ENCODE measurements at regions of chr11 and their contacts with region 1.

Region 1: DNA sequence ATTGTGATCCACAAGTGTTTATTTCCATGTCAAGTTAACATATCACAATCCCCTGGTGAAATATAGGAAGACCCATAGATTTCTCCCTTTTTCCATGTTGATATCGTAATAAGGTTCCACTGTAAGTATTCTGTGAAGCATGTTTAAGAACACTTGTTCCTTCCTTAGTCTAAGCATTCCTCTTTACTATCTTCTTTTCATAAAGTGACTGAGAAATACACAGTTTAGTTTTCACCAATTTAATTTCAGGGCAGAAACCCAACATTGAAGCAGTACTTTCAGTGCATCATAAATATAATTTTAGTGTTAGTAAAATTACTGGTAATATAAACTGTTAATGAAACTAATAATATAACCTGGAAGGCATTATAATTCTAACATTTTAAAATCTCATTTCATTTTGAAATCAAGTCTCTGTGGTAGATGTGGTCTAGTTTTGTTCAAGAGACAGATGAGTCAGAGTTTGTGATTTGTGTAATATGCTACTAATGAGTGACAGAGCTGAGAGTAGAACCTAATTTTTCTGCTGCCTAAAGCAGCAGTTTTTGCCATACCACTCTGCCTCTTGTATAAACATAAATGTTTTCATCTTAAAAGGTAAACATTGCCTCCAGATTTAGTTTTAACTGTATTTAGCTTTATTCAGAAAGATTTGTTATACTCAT is 79.4 kb downstream of the ATM start:
- DNase-seq: no peak
- H3K4me3 ChIP-seq: no peak overlapping the region
- H3K27ac ChIP-seq: no peak overlapping the region
- H3K4me1 ChIP-seq: no peaks in the 10 kb centered on the region
- H3K27me3 ChIP-seq: no peaks in the 10 kb centered on the region
- CTCF ChIP-seq: no peak

Region 2: GRCh38 chr11:108193725-108194124 is 108.5 kb before region 1 on chr11:
- intact Hi-C with region 1: loop called (anchors 5 kb)
- DNase-seq: no peak
- H3K4me3 ChIP-seq: no peak overlapping the region
- H3K27ac ChIP-seq: no peak overlapping the region
- H3K4me1 ChIP-seq: no peaks in the 10 kb centered on the region
- H3K27me3 ChIP-seq: no peaks in the 10 kb centered on the region
- CTCF ChIP-seq: no peak

Region 3: DNA sequence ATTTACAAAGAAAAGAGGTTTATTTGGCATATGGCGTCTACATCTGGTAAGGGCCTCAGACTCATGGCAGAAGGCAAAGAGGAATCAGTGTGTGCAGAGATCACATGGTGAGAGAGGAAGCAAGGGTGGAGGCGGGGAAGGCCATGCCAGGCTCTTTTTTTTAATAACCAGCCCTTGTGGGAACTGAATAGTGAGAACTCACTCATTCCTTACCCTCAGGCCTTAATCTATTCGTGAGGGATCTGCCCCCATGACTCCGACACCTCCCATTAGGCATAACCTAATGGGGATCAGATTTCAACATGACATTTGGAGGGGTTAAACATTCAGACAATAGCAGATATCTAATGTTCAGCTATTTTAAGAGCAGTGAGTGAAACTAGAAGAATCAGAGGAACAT is 23.7 kb before region 1 on chr11:
- intact Hi-C with region 1: no loop called
- DNase-seq: no peak
- H3K4me3 ChIP-seq: no peak overlapping the region
- H3K27ac ChIP-seq: peak overlapping the region; percentile 22 to 57
- H3K4me1 ChIP-seq: peaks cover 0 to 5% of the 10 kb centered on the region in 2 donors
- H3K27me3 ChIP-seq: no peaks in the 10 kb centered on the region
- CTCF ChIP-seq: no peak

Region 4: DNA sequence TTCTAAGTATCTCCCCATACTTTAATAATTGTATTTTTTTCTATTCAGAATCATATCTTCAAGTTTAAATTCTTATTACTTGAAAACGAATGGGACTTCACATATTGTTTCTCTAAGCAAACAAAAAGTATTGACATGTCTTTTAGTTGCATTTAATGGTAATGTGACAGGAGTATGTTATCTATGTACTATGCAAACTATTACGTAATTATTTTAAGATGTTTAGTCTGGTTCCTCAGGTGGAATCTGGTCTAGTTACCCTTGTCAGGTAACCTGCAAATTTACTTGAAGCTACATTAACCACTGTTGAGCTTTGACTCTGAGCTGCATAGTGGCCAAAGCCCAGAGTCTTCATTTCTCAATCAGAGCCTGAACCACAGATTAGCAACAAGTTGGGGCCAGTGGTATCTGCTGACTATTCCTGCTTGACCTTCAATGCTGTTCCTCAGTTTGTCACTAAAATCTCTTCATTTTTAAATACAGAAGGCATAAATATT is 31.2 kb after region 1 on chr11:
- intact Hi-C with region 1: no loop called
- DNase-seq: no peak
- H3K4me3 ChIP-seq: no peak overlapping the region
- H3K27ac ChIP-seq: no peak overlapping the region
- H3K4me1 ChIP-seq: no peaks in the 10 kb centered on the region
- H3K27me3 ChIP-seq: no peaks in the 10 kb centered on the region
- CTCF ChIP-seq: no peak

Region 5: GRCh38 chr11:108825381-108825780 is 523.1 kb after region 1 on chr11:
- intact Hi-C with region 1: no loop called
- DNase-seq: no peak
- H3K4me3 ChIP-seq: no peak overlapping the region
- H3K27ac ChIP-seq: no peak overlapping the region
- H3K4me1 ChIP-seq: no peaks in the 10 kb centered on the region
- H3K27me3 ChIP-seq: no peaks in the 10 kb centered on the region
- CTCF ChIP-seq: no peak

Measured in ascending aorta (tissue), 2 donors.